Activated T-helper 1 cell treated with anti-CD3 and anti-CD28 coated beads, Interleukin-12 subunit alpha, Interleukin-12 subunit beta, Interleukin-2, Interleukin-4 antibody, amounts not matched to agents 30 ng/mL and 10 ng/mL and 1 ng/mL, durations not matched to agents 14 hours and 24 hours and 36 hours (primary cell): ENCODE measurements at regions of chr6 and their contacts with region 1.

Region 1: DNA sequence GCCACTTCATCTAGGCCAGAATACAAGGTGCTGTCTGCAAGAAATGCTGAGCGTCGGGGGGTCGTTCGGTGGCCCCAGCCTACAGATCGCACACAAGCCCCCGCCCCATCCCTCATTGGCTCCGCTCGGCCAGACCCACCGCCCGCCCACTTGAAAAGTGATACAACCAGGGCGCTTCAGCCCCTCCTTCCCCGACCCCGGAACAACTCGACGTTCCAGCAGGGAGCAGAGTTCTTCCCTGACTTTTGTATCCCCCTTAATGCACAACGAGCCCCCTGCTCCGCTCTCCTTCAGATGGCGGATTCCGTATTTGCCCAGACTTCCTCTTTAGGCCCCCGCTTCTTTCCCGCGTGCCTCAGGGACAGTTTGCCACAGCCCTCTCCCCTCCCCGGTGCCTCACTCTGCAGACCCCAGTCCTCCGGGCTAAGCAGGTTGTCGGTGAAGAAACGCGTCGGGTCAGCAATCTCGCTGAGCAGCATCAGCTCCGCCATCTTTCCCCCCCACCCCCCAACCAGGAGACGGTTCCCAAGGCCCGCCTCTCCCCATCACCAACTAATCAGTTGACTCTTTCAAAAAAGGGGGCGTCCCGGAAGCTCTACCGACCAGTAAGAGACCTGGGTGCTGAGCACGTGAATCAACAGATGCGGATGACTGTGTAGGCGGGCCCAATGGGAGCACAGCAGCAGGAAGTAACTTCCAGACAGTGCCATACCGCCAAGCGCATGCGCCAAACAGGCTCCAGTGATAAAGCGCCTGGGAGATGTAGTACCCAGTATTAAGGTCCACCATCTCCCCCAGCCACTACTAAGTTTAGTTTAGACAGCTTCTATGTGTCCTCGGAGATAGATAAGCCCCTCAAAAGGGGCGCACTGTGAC is at the start of gene ATF6B:
- DNase-seq: peak; percentile 95
- H3K4me3 Mint-ChIP-seq: peak within 1 kb of the TSS; percentile 99
- H3K27ac Mint-ChIP-seq: peak within 1 kb of the TSS; percentile 94
- H3K4me1 Mint-ChIP-seq: peaks cover 45% of the 10 kb centered on the region
- H3K27me3 Mint-ChIP-seq: peaks cover 2% of the 10 kb centered on the region
- total RNA-seq, gene ATF6B: 80.1 and 97.6 TPM in 2 replicates

Region 2: GRCh38 chr6:32148289-32149091 is 20.5 kb after region 1 on chr6:
- intact Hi-C with region 1: loop called (anchors 1 kb)
- DNase-seq: peak; percentile 67
- H3K4me3 Mint-ChIP-seq: peak overlapping the region; percentile 84
- H3K27ac Mint-ChIP-seq: peak overlapping the region; percentile 75
- H3K4me1 Mint-ChIP-seq: peaks cover 35% of the 10 kb centered on the region
- H3K27me3 Mint-ChIP-seq: peaks cover 56% of the 10 kb centered on the region

Region 3: GRCh38 chr6:32190054-32190851 is 62.3 kb after region 1 on chr6 and contains the start of gene PBX2:
- intact Hi-C with region 1: loop called (anchors 1 kb)
- DNase-seq: peak; percentile 75
- H3K4me3 Mint-ChIP-seq: peak within 1 kb of the TSS; percentile 97
- H3K27ac Mint-ChIP-seq: peak within 1 kb of the TSS; percentile 97
- H3K4me1 Mint-ChIP-seq: peaks cover 72% of the 10 kb centered on the region
- H3K27me3 Mint-ChIP-seq: no peaks in the 10 kb centered on the region
- total RNA-seq, gene PBX2: 91.9 and 94.0 TPM in 2 replicates

Region 4: DNA sequence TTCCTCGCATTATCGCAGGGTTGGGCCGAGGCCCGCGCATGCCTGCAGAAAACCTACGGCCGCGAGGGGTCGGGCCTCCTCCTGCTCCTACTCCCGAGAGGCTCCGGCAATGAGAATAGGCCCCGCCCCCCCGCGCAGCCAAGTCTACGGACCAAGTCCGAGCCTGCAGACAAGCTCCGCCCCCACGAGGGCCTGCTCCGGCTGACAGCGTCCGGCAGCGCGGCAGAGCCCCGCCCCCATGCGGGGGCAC is 67.6 kb after region 1 on chr6:
- intact Hi-C with region 1: loop called (anchors 1 kb)
- DNase-seq: peak; percentile 100
- H3K4me3 Mint-ChIP-seq: peak overlapping the region; percentile 97
- H3K27ac Mint-ChIP-seq: peak overlapping the region; percentile 98
- H3K4me1 Mint-ChIP-seq: peaks cover 48% of the 10 kb centered on the region
- H3K27me3 Mint-ChIP-seq: peaks cover 2% of the 10 kb centered on the region

Region 5: GRCh38 chr6:32340242-32340641 is 212.3 kb after region 1 on chr6:
- intact Hi-C with region 1: no loop called
- DNase-seq: no peak
- H3K4me3 Mint-ChIP-seq: no peak overlapping the region
- H3K27ac Mint-ChIP-seq: no peak overlapping the region
- H3K4me1 Mint-ChIP-seq: no peaks in the 10 kb centered on the region
- H3K27me3 Mint-ChIP-seq: peaks cover 27% of the 10 kb centered on the region

Region 6: GRCh38 chr6:32815996-32816395 is 688.0 kb after region 1 on chr6:
- intact Hi-C with region 1: no loop called
- DNase-seq: no peak
- H3K4me3 Mint-ChIP-seq: no peak overlapping the region
- H3K27ac Mint-ChIP-seq: no peak overlapping the region
- H3K4me1 Mint-ChIP-seq: peaks cover 18% of the 10 kb centered on the region
- H3K27me3 Mint-ChIP-seq: no peaks in the 10 kb centered on the region